ENCODE measurements at regions of chr5 and their contacts with region 1.

Region 1: DNA sequence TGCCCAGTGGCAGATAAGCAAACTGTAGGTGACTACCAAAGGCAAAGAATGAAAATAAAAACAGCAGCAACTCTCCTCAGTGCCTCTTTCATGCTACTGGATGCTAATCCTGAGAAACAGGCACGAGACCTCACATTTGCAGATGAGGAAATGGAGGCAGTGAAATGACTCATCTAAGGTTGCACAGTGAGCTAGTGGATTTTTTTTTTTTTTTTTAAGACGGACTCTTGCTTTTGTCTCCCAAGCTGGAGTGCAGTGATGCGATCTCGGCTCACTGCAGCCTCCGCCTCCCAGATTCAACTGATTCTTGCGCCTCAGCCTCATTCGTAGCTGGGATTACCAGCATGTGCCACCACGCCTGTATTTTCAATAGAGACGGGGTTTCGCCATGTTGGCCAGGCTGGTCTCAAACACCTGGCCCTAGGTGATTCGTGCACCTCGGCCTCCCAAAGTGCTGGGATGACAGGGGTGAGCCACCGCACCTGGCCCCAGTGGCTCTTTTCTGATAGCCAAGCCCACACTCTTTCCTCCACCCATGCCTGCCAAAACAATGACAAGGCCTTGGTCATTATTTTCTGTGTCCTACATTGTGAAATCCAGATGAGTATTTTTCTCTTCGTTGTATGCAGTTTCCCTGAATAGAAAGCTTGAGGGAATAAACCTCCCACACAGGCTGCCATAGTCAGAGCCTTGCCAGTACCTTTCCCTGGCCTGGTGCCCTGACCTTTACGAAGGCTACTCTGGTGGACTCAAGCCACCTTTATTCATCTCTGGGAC is 19.2 kb downstream of the DOCK2 start:
- DNase-seq: peak; percentile 40
- ATAC-seq: peak; percentile 59
- H3K4me3 Mint-ChIP-seq: no peak overlapping the region
- H3K27ac Mint-ChIP-seq: peak overlapping the region; percentile 79
- H3K4me1 Mint-ChIP-seq: peaks cover 67% of the 10 kb centered on the region
- H3K27me3 Mint-ChIP-seq: no peaks in the 10 kb centered on the region

Region 2: GRCh38 chr5:169637085-169637548 is 19.2 kb before region 1 on chr5 and contains the start of gene DOCK2:
- CTCF ChIA-PET with region 1: interaction called, 3 read pairs
- POLR2A ChIA-PET with region 1: interaction called, 3 read pairs
- intact Hi-C with region 1: loop called (anchors 1 to 2 kb)
- DNase-seq: peak; percentile 82
- ATAC-seq: peak; percentile 77
- H3K4me3 Mint-ChIP-seq: peak within 1 kb of the TSS; percentile 89
- H3K27ac Mint-ChIP-seq: peak within 1 kb of the TSS; percentile 94
- H3K4me1 Mint-ChIP-seq: peaks cover 46% of the 10 kb centered on the region
- H3K27me3 Mint-ChIP-seq: no peaks in the 10 kb centered on the region
- total RNA-seq, gene DOCK2: 189 to 198 TPM

Measured in activated CD4-positive, alpha-beta T cell treated with anti-CD3 and anti-CD28 coated beads for 36 hours (primary cell).